Dorsolateral prefrontal cortex (tissue), 120 donors: ENCODE measurements at regions of chr18 and their contacts with region 1.

Region 1: DNA sequence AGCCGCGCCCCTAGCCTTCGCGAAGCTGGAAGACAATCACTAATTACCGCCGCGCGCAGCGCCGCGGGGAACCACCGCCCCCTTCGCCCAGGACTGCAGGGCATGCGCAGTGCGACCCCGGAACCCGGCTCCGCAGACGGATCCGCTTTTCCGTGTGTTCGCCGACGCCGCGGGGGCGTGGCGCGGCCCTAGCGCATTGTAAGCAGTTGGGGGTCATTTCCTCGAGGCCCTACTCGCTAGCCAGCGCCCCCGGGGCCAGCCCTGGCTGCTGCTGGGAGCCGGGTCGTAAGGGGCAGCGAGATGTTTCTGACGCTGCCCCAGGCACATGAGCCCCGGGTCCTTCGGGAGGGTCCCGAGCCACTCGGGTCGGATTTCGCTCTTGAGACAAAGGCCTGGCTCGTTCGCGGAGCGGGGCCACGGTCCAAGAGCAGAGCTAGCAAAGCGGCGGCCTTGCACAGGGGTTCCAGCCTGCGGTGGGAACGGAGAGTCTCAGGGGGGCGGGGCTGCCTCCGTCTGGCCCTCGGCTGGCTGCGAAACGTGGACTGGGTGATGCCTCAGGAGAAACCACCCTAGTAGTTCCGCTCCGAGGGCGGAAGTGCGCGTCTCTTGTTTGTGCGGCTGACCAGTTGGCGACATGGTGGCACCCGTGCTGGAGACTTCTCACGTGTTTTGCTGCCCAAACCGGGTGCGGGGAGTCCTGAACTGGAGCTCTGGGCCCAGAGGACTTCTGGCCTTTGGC is at the starts of genes ELP2 and SLC39A6:
- DNase-seq: peak; percentile 94 to 98 (median 96)
- H3K4me3 ChIP-seq: peak within 1 kb of the TSS; percentile 67 to 100 (median 97)
- H3K27ac ChIP-seq: peak within 1 kb of the TSS; percentile 91 to 100 (median 99)
- H3K27me3 ChIP-seq: no peaks in the 10 kb centered on the region
- CTCF ChIP-seq: peak in 33 of 56 donors; percentile 6 to 56 (median 28)
- total RNA-seq, gene ELP2: 61.4 to 145 (median 105) TPM
- total RNA-seq, gene SLC39A6: 26.2 to 53.3 (median 36.5) TPM

Region 2: GRCh38 chr18:36012891-36013290 is 116.6 kb before region 1 on chr18:
- intact Hi-C with region 1: no loop called
- DNase-seq: no peak
- H3K4me3 ChIP-seq: no peak overlapping the region
- H3K27ac ChIP-seq: no peak overlapping the region
- H3K27me3 ChIP-seq: no peaks in the 10 kb centered on the region
- CTCF ChIP-seq: no peak

Region 3: DNA sequence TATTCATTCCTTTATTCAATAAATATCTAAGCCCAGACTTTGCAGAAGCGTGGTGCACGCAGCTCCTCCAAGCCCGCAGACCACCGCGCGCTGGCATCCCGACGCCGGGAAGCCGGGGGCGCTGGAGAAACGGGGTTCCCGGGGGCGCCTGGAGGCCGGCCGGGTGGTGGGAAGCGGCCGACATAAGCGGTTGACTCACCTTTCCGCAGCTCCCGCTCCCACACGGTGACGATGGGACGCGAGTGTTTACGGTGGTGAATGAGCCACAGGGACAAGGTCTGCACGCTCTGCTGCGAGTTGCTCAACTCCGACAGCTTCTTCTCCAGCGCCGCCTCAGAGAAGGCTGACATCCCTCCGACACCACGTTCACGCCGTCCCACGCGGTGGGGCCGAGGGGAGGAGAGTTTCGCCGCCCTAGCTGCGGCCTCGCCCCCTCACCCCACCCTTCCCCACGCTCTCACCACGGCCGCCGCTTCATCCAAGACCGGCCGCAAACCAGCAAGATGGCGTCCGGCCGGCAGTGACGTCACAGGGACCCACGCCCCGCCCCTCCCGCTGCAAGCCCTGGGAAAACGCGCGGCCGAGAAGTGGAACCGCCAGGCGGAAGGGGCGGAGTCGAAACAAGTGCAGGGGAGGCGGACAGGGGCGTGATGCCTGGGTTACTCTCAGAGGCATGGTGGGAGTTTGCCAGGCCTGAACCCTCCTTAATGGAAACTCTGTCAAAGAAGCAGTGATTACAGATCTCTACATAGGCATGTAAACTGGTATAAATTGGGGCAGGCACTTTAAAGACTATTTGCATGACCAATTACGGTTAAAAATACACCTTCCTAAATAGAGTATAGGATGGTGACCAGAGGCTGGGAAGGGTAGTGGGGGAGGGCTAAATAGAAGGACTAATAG is 62.2 kb before region 1 on chr18 and contains the start of gene RPRD1A:
- intact Hi-C with region 1: loop called (anchors 1 to 5 kb)
- DNase-seq: peak; percentile 96 to 99 (median 98)
- H3K4me3 ChIP-seq: peak within 1 kb of the TSS; percentile 64 to 99 (median 93)
- H3K27ac ChIP-seq: peak within 1 kb of the TSS; percentile 6 to 96 (median 87)
- H3K27me3 ChIP-seq: no peaks in the 10 kb centered on the region
- CTCF ChIP-seq: peak in 33 of 56 donors; percentile 8 to 55 (median 33)
- total RNA-seq, gene RPRD1A: 74.9 to 135 (median 105) TPM

Region 4: GRCh38 chr18:36296650-36297416 is 167.4 kb after region 1 on chr18:
- intact Hi-C with region 1: loop called in 1 of 2 experiments (anchors 10 kb)
- DNase-seq: peak; percentile 48 to 86 (median 74)
- H3K4me3 ChIP-seq: peak overlapping the region; percentile 43 to 89 (median 76)
- H3K27ac ChIP-seq: peak overlapping the region in 52 of 59 donors; percentile 10 to 91 (median 70)
- H3K27me3 ChIP-seq: peaks cover 0 to 5% (median 0%) of the 10 kb centered on the region in 45 donors
- CTCF ChIP-seq: peak in 54 of 56 donors; percentile 33 to 71 (median 55)